Vagina (tissue), 2 donors: ENCODE measurements at regions of chr7 and their contacts with region 1.

Region 1: DNA sequence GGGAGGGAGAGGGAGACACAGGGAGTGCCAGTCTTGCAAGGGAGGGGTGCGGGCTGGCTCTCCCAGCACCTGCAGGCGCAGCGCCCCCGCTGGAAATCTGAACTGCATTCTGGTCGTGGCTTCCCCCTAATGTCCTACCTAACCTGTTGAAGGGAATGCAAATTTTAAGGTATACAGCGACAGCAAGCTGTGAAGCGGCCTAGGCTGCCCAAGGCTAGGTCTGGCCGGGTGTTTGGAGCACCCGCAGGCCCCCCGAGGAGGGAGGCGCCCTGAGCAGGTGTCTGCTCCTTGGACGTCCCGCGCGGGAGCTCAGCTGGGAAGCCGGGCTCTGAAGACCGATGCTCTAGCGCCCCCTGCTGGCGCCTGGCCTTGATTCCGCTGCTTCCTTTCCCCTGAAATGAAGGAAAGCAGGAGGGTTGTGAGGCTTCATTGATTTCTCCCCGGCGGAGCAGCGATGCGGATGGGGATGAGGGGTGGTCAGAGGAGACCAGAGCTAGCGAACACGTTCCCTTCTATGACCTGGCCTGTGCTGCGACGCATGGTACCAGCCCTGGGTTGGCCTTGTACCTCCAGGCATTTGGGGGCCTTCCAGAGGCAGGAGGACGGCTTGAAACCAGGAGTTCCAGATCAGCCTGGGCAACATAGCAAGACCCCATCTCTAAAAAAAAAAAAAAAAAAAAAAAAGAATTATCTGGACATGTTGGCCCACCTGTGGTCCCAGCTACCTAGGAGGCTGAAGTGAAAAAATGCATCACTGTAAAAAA is 601.3 kb downstream of the GALNT17 start:
- DNase-seq: no peak
- H3K4me3 ChIP-seq: no peak overlapping the region
- H3K27ac ChIP-seq: no peak overlapping the region
- H3K4me1 ChIP-seq: no peaks in the 10 kb centered on the region
- H3K27me3 ChIP-seq: no peaks in the 10 kb centered on the region
- CTCF ChIP-seq: peak; percentile 79 to 88 (median 82)
- POLR2A ChIP-seq: no peak

Region 2: DNA sequence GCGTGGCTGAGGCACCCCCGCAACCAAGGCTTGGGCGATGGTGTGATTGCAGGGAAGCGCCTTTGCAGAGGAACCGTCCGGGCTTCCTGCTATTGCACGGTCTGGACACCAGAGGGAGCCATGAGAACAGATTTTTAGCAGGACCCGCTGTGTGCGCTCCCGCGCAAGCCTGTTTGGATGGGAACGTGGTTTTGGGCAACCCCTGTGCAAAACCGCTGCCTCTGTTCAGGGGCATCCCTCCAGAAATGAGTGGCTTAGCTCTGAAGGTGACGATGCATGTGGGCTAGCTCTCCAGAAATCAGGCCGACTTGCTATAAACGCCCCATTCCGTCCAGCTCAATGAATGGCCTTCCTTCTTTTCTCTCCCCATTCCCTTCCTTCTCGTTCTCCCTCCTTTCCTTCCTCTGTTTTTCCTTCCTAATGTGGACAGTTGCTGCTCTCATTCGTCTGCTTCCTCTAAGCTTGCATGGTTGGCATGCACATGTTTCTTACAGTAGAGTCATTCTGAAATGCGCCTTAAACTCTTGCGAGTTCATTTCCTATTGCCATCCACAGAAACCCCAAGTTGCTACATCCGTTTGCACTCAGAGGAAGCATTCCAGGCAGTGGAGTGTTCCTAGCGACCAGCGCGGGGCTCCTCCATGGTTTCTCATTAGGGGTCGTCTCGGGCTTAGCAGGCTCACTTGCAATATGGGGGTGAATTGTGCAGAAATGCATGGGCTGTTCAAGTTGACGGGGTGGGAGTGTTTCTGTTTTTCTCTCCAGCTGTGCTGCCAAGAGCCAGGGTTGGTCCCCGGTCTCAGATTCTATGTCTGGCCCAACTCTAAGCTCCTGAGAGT is 903.8 kb before region 1 on chr7:
- intact Hi-C with region 1: loop called (anchors 10 kb)
- DNase-seq: no peak
- H3K4me3 ChIP-seq: peak overlapping the region in 1 of 2 donors; percentile 15
- H3K27ac ChIP-seq: no peak overlapping the region
- H3K4me1 ChIP-seq: no peaks in the 10 kb centered on the region
- H3K27me3 ChIP-seq: no peaks in the 10 kb centered on the region
- CTCF ChIP-seq: peak; percentile 59 to 78 (median 68)
- POLR2A ChIP-seq: no peak

Region 3: DNA sequence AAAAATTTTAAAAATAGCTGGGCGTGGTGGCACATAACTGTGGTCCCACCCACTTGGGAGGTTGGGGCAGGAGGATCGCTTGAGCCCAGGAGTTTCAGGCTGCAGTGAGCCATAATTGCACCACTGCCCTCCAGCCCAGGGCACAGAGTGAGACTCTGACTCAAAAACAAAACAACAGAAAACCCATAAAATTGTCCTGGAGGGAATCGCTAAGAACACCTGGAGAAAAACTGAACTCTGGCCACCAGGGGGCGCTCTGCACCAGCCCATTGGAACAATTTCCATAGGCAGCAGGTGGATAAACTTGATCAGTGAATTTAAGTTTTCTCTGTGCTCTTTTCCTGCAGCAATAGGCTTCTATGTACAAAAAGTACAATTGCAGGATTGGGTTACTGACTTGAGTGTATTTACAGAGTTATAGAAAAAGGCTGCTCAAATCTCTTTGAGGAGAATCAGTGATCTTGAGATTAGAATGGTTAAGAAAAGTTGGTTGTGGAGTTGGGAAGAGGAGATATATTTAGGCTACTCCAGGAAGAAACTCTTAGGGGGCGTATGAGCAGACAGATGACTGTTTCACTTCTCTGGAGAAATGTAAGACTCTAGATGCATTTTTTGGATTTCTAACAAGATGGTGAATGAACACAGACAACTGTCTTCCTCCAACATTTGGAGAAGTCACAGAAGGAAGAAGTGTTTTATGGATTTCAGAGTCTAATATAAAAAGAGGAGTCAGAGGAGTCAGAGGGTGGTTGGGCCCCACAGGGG is 876.2 kb before region 1 on chr7:
- intact Hi-C with region 1: loop called (anchors 10 kb)
- DNase-seq: no peak
- H3K4me3 ChIP-seq: no peak overlapping the region
- H3K27ac ChIP-seq: no peak overlapping the region
- H3K4me1 ChIP-seq: no peaks in the 10 kb centered on the region
- H3K27me3 ChIP-seq: no peaks in the 10 kb centered on the region
- CTCF ChIP-seq: peak; percentile 73 to 94 (median 79)
- POLR2A ChIP-seq: no peak

Region 4: GRCh38 chr7:71817916-71818315 is 84.6 kb after region 1 on chr7:
- intact Hi-C with region 1: no loop called
- DNase-seq: no peak
- H3K4me3 ChIP-seq: no peak overlapping the region
- H3K27ac ChIP-seq: no peak overlapping the region
- H3K4me1 ChIP-seq: no peaks in the 10 kb centered on the region
- H3K27me3 ChIP-seq: no peaks in the 10 kb centered on the region
- CTCF ChIP-seq: no peak
- POLR2A ChIP-seq: no peak